A549 (cell line): ENCODE measurements at regions of chr3 and their contacts with region 1.

Region 1: DNA sequence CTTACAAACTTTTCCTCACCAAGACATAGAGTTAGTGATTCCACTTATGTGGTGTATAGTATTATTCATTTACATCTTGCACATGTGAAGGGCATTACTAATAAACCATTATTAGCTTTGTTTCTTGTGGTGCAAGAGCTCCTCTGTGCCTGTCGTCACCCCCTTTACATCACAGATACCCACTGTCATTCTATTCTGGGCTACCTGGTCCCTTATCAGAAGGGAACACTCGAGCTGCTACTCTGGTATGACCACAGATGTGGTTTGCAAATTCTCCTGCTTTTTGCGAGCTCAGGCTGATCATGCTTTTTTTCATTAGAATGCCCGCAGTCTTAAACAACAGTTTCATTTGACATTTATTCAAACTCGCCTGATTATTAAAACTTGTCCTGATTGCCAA is 13.9 kb upstream of the SENP2 start:
- DNase-seq: no peak
- ATAC-seq: no peak
- H3K4me3 ChIP-seq: no peak overlapping the region
- H3K27ac ChIP-seq: no peak overlapping the region
- H3K4me1 ChIP-seq: no peaks in the 10 kb centered on the region
- CTCF ChIP-seq: no peak
- EP300 ChIP-seq: no peak
- POLR2A ChIP-seq: no peak
- RAD21 ChIP-seq: no peak

Region 2: DNA sequence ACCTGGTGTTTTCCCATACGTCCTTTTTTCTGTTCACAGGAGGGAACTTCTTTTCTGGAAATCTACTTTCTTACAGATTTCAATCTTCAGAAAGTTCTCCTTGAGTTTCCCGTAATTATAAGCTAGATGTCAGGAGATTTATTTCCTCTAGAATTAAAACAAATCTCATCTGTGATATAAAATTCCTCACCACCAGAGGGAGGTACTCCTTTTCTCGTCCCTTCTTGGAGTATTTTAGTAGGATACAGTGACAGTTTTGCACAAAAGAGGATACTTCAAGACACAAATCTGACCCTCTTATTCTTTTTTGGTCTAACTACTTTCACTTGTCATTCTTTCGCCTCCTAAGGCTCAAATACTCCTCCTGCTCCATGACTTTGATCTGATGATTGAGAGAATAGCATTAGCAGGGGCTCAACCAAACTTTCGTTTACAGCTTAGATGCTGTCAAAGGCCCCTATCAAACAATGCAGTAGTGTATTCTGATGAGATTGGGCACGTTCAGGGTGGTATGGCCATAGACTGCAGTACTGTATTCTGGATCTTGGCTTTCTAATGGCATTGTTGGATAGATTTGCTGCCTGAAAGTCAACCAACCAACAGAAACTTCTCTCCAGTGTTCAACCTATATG is 111.3 kb before region 1 on chr3:
- CTCF ChIA-PET with region 1: interaction called, 21 read pairs
- POLR2A ChIA-PET with region 1: no interaction called
- DNase-seq: peak; percentile 21 to 26
- ATAC-seq: peak in 1 of 2 experiments; percentile 55; a peak in 2 of 6 replicates
- H3K4me3 ChIP-seq: no peak overlapping the region
- H3K27ac ChIP-seq: no peak overlapping the region
- H3K4me1 ChIP-seq: no peaks in the 10 kb centered on the region
- CTCF ChIP-seq: peak; percentile 50
- EP300 ChIP-seq: no peak
- POLR2A ChIP-seq: no peak
- RAD21 ChIP-seq: peak; percentile 52 to 53; a peak in 4 of 5 replicates

Region 3: GRCh38 chr3:185552358-185552877 is 19.8 kb before region 1 on chr3 and contains the start of gene LIPH:
- CTCF ChIA-PET with region 1: interaction called, 50 read pairs
- POLR2A ChIA-PET with region 1: no interaction called
- DNase-seq: peak; percentile 48 to 88
- ATAC-seq: peak; percentile 83 to 93; a peak in 5 of 6 replicates
- H3K4me3 ChIP-seq: peak within 1 kb of the TSS; percentile 52
- H3K27ac ChIP-seq: peak within 1 kb of the TSS; percentile 86 to 87
- H3K4me1 ChIP-seq: peaks cover 42% of the 10 kb centered on the region
- CTCF ChIP-seq: no peak
- EP300 ChIP-seq: no peak
- POLR2A ChIP-seq: no peak
- RAD21 ChIP-seq: no peak
- polyA plus RNA-seq, gene LIPH: 34.9 and 38.9 TPM in 2 replicates

Region 4: GRCh38 chr3:185561374-185561943 is 10.7 kb before region 1 on chr3:
- CTCF ChIA-PET with region 1: interaction called, 50 read pairs
- POLR2A ChIA-PET with region 1: no interaction called
- DNase-seq: no peak
- ATAC-seq: no peak
- H3K4me3 ChIP-seq: no peak overlapping the region
- H3K27ac ChIP-seq: no peak overlapping the region
- H3K4me1 ChIP-seq: peaks cover 14% of the 10 kb centered on the region
- CTCF ChIP-seq: no peak
- EP300 ChIP-seq: no peak
- POLR2A ChIP-seq: no peak
- RAD21 ChIP-seq: no peak

Region 5: DNA sequence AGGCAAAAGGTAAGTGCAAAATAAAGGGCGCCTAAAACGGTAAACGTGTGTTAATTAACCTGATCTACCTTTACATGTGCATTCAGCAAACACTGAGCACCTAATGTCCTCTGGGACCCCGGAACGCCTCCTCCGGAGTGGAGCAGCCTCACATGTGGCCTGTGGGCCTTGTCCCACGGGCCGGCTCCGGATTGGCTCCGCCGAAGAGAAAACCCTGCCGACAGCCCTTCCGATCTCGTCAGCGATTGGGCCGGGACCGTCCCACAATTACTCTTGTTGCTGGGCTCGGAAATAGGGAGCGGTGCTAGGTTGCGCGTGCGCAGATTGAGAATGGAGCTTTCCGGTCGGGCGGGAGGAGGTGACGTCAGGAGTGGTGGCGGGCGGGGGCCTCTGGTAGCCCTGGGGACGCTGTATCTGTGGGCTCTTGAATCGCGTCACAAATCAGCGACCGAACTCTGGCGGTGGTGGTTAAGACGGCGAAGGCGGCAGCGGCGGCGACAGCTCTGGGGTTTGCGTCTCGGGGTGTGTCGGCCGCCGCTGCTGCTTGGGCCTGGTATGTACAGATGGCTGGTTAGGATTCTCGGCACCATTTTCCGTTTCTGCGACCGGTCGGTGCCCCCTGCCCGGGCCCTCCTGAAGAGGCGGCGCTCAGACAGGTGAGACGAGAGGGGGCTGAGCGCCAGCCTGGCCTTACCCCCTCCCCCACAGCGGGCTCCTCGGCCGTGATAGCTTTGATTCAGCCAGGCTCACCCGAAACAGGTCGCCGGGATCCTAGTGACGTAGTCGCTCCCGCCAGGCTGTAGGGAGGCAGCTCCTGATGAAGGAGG is 13.9 kb after region 1 on chr3 and contains the start of gene SENP2:
- CTCF ChIA-PET with region 1: interaction called, 16 read pairs
- POLR2A ChIA-PET with region 1: no interaction called
- DNase-seq: peak; percentile 90 to 98
- ATAC-seq: peak; percentile 99
- H3K4me3 ChIP-seq: peak within 1 kb of the TSS; percentile 80
- H3K27ac ChIP-seq: peak within 1 kb of the TSS; percentile 81 to 91
- H3K4me1 ChIP-seq: peaks cover 6% of the 10 kb centered on the region; the same call in 1 of the 3 replicates
- CTCF ChIP-seq: no peak
- EP300 ChIP-seq: no peak
- POLR2A ChIP-seq: peak; percentile 35
- RAD21 ChIP-seq: no peak
- polyA plus RNA-seq, gene SENP2: 16.3 and 22.4 TPM in 2 replicates

Region 6: GRCh38 chr3:185605566-185605965 is 33.4 kb after region 1 on chr3:
- CTCF ChIA-PET with region 1: no interaction called
- POLR2A ChIA-PET with region 1: no interaction called
- DNase-seq: no peak
- ATAC-seq: no peak
- H3K4me3 ChIP-seq: no peak overlapping the region
- H3K27ac ChIP-seq: no peak overlapping the region
- H3K4me1 ChIP-seq: no peaks in the 10 kb centered on the region
- CTCF ChIP-seq: no peak
- EP300 ChIP-seq: no peak
- POLR2A ChIP-seq: no peak
- RAD21 ChIP-seq: no peak

Region 7: GRCh38 chr3:185693985-185694653 is 121.9 kb after region 1 on chr3:
- CTCF ChIA-PET with region 1: no interaction called
- POLR2A ChIA-PET with region 1: no interaction called
- DNase-seq: no peak
- ATAC-seq: no peak
- H3K4me3 ChIP-seq: no peak overlapping the region
- H3K27ac ChIP-seq: no peak overlapping the region
- H3K4me1 ChIP-seq: peaks cover 3% of the 10 kb centered on the region
- CTCF ChIP-seq: no peak
- EP300 ChIP-seq: no peak
- POLR2A ChIP-seq: no peak
- RAD21 ChIP-seq: no peak